ENCODE measurements at regions of chr17 and their contacts with region 1.

Region 1: GRCh38 chr17:7454980-7455379 is 10.1 kb downstream of the CHRNB1 start:
- DNase-seq: no peak
- ATAC-seq: no peak
- H3K4me3 Mint-ChIP-seq: peak overlapping the region; percentile 96
- H3K27ac Mint-ChIP-seq: peak overlapping the region; percentile 93
- H3K4me1 Mint-ChIP-seq: peaks cover 19% of the 10 kb centered on the region
- H3K27me3 Mint-ChIP-seq: no peaks in the 10 kb centered on the region

Region 2: DNA sequence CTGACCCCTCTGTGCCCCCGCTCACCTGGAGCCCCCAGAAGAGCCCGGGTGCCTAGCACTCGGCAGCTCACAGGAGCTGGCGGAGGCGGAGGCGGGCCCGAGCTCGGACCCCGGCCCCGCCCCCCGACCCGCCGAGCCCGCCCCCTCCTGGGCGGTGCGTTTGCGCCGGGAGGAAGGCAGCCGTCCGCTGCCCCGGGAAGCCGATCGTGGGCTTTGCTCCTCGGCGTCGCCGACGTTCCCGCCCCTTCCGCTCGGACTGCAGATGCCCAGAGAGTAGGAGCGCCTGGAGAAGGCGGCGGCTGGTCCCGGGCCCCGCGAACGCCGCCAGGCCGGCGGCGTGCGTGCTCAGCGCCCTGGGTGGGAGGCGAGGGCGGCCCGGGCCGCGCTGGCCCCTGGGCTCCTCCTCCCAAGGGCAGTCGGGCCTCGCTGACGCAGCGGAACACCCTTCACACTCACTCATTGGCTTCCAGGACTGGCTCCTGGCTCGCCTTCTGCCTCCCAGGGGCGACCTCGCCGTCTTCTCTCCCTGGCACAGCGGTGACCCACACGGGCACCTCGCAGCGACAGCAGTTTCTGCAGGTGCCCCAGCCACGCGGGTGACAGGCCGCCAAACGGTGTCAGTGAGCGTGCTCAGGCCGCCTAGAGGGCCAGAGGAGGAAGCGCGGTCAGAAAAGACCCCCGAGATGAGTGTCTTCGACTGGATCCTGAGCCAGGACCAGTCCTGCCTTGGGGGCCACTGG is 60.4 kb before region 1 on chr17 and contains the start of gene PLSCR3:
- CTCF ChIA-PET with region 1: no interaction called
- POLR2A ChIA-PET with region 1: no interaction called
- intact Hi-C with region 1: loop called in 1 of 2 experiments (anchors 1 kb)
- DNase-seq: peak; percentile 90
- ATAC-seq: peak; percentile 86
- H3K4me3 Mint-ChIP-seq: peak within 1 kb of the TSS; percentile 88
- H3K27ac Mint-ChIP-seq: peak within 1 kb of the TSS; percentile 95
- H3K4me1 Mint-ChIP-seq: peaks cover 26% of the 10 kb centered on the region
- H3K27me3 Mint-ChIP-seq: no peaks in the 10 kb centered on the region
- total RNA-seq, gene PLSCR3: 69.3 to 78.9 TPM

Region 3: GRCh38 chr17:7444682-7445618 is 10.0 kb before region 1 on chr17 and contains the start of gene CHRNB1:
- CTCF ChIA-PET with region 1: interaction called, 16 read pairs
- POLR2A ChIA-PET with region 1: interaction called, 3 read pairs
- intact Hi-C with region 1: no loop called
- DNase-seq: peak; percentile 31
- ATAC-seq: peak; percentile 6
- H3K4me3 Mint-ChIP-seq: peak within 1 kb of the TSS; percentile 47
- H3K27ac Mint-ChIP-seq: no peak within 1 kb of the TSS
- H3K4me1 Mint-ChIP-seq: peaks cover 26% of the 10 kb centered on the region
- H3K27me3 Mint-ChIP-seq: peaks cover 43% of the 10 kb centered on the region
- total RNA-seq, gene CHRNB1: 7.8 to 8.7 TPM

Region 4: GRCh38 chr17:7478276-7479153 is 23.5 kb after region 1 on chr17:
- CTCF ChIA-PET with region 1: interaction called, 4 read pairs
- POLR2A ChIA-PET with region 1: interaction called, 6 read pairs
- intact Hi-C with region 1: loop called (anchors 1 kb)
- DNase-seq: peak; percentile 80
- ATAC-seq: peak; percentile 42
- H3K4me3 Mint-ChIP-seq: peak overlapping the region; percentile 87
- H3K27ac Mint-ChIP-seq: peak overlapping the region; percentile 91
- H3K4me1 Mint-ChIP-seq: peaks cover 67% of the 10 kb centered on the region
- H3K27me3 Mint-ChIP-seq: no peaks in the 10 kb centered on the region

Region 5: GRCh38 chr17:7614422-7615264 is 159.7 kb after region 1 on chr17 and contains the start of gene FXR2:
- CTCF ChIA-PET with region 1: no interaction called
- POLR2A ChIA-PET with region 1: no interaction called
- intact Hi-C with region 1: loop called in 1 of 2 experiments (anchors 1 kb)
- DNase-seq: peak; percentile 100
- ATAC-seq: peak; percentile 95
- H3K4me3 Mint-ChIP-seq: peak within 1 kb of the TSS; percentile 85
- H3K27ac Mint-ChIP-seq: peak within 1 kb of the TSS; percentile 93
- H3K4me1 Mint-ChIP-seq: peaks cover 32% of the 10 kb centered on the region
- H3K27me3 Mint-ChIP-seq: no peaks in the 10 kb centered on the region
- total RNA-seq, gene FXR2: 35.6 to 50.2 TPM

Measured in activated CD4-positive, alpha-beta T cell treated with anti-CD3 and anti-CD28 coated beads for 36 hours (primary cell).